Posterior vena cava (tissue), 2 donors: ENCODE measurements at regions of chr16 and their contacts with region 1.

Region 1: DNA sequence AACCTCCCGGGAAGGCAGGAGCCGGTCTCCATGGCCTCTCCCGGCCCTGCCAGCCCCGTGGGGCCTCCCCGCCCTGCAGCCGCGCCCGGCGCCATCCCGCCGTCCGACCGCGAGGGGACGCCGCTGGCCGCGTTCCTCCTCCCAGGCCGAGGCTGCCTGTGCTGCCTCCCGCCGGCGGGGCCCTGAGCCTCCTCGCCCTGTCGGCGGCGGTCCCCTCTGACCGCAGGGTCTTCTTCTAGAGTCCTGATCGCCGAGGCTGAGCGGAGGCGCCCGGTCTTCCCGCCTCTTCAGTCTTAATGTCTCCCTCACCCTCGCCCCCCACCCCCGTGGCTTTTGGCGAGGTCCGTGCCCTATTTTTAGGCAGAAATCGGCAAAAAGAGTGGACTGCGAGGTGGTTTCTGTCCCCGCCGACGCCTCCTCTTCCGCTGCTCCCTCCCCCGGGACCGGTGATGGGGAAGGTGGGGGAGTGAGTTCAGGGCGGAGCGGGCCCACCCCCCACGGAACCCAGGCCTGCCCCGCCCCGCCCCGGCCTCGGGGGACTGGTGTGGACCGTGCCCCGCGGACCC is 794 bp upstream of the CPNE7 start:
- DNase-seq: peak; percentile 88

Region 2: GRCh38 chr16:89601906-89602272 is 27.1 kb after region 1 on chr16:
- intact Hi-C with region 1: loop called in 1 of 2 experiments (anchors 2 kb)
- DNase-seq: no peak